MCF 10A (cell line): ENCODE measurements at regions of chr1 and their contacts with region 1.

Region 1: GRCh38 chr1:185595835-185596667 is 138.1 kb upstream of the HMCN1 start:
- DNase-seq: peak; percentile 84
- H3K4me3 Mint-ChIP-seq: no peak overlapping the region
- H3K27ac Mint-ChIP-seq: no peak overlapping the region
- H3K4me1 Mint-ChIP-seq: no peaks in the 10 kb centered on the region
- H3K27me3 Mint-ChIP-seq: no peaks in the 10 kb centered on the region
- CTCF ChIP-seq: peak; percentile 90

Region 2: GRCh38 chr1:185300152-185300551 is 295.9 kb before region 1 on chr1:
- CTCF ChIA-PET with region 1: interaction called, 19 read pairs
- POLR2A ChIA-PET with region 1: no interaction called
- intact Hi-C with region 1: no loop called
- DNase-seq: no peak
- H3K4me3 Mint-ChIP-seq: no peak overlapping the region
- H3K27ac Mint-ChIP-seq: no peak overlapping the region
- H3K4me1 Mint-ChIP-seq: no peaks in the 10 kb centered on the region
- H3K27me3 Mint-ChIP-seq: no peaks in the 10 kb centered on the region
- CTCF ChIP-seq: no peak

Region 3: DNA sequence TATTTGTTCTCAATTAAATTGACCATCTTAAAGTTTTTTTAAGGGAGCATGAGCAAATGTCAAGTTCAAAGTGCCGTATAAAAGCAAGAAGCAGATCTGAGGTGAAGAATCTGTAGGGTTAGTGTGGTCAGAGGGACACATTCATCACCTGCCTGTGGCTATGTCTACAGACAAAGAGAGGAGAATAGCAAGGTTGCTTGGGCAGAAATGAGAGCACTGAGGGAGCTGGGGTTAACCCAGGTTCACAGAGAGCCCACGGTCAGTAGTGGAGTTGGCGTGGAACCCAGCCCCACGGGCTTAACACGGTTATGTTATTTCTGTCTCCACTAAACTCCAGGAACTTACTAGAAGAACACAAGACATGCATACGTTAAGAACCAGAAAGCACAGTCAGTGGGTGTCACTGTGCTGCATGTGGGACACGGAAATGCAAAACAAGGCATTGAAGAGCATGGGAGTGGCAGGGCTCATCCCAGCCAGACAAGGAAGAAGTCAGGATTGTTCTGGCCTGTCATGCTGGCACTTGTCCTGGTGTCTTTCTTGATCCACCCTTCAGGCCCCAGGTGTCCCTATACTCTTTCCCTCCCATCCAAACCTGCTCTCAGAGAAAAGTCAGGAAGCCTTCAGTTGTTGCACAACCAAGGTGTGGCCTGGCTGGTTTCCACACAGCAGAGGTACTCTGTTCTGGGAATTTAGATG is 183.5 kb before region 1 on chr1:
- CTCF ChIA-PET with region 1: interaction called, 10 read pairs
- POLR2A ChIA-PET with region 1: interaction called, 3 read pairs
- intact Hi-C with region 1: no loop called
- DNase-seq: peak; percentile 93
- H3K4me3 Mint-ChIP-seq: no peak overlapping the region
- H3K27ac Mint-ChIP-seq: peak overlapping the region; percentile 14
- H3K4me1 Mint-ChIP-seq: peaks cover 32% of the 10 kb centered on the region
- H3K27me3 Mint-ChIP-seq: no peaks in the 10 kb centered on the region
- CTCF ChIP-seq: no peak

Region 4: DNA sequence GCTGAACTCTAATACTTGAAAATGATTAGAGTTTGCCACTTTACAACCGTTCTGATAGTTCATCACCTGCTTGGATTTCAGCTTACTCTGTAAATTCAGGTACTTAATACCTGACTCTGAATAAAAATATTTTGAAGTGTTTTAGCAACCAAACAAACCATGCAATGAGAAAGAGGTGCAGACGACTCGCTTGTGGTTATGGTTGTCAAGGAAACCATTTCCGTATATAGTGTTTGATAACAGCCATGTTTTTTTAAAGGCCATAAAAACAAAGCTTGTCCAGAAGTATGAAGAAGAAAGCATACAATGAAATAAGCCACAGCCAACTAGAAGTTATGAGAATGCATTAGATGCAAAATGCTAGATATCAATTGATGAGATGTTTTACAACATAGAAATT is 29.1 kb before region 1 on chr1:
- CTCF ChIA-PET with region 1: interaction called, 25 read pairs
- POLR2A ChIA-PET with region 1: interaction called, 6 read pairs
- intact Hi-C with region 1: no loop called
- DNase-seq: peak; percentile 77
- H3K4me3 Mint-ChIP-seq: no peak overlapping the region
- H3K27ac Mint-ChIP-seq: peak overlapping the region; percentile 96
- H3K4me1 Mint-ChIP-seq: peaks cover 53% of the 10 kb centered on the region
- H3K27me3 Mint-ChIP-seq: no peaks in the 10 kb centered on the region
- CTCF ChIP-seq: no peak

Region 5: DNA sequence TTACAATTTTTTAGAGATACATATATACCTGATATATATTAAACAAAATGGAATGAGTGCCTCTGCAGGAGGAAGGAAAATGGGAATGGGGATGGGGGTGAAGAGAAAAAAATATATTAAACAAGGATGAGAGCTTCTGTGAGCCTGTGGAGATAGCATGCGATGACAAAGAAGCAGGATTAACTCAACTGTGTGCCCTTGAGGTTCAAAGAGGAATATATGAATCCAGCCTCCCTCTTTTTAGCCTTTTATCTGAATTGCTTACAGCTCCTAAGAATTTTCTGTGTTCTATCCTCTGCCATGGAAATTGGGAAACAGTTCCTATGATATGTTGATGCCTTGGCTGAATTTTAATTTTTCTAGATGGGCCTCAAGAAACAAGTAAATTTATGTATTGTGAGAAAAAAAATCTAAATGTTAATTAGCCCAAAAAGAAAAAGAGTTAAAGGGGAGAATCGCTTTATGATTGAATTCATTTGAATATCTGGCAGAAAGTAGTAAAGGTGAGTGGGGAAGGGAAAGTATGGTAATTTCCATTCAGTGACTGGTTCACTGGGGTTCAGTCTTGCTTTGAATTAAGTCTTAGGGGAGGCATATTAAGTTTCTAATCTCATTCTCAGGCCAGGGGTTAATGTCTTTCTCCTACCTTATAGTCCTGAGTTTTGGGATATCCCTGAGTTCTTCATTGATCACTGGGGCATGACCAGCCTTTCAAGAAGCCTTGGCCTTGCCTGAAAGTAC is 31.9 kb after region 1 on chr1:
- CTCF ChIA-PET with region 1: interaction called, 15 read pairs
- POLR2A ChIA-PET with region 1: no interaction called
- intact Hi-C with region 1: no loop called
- DNase-seq: no peak
- H3K4me3 Mint-ChIP-seq: no peak overlapping the region
- H3K27ac Mint-ChIP-seq: no peak overlapping the region
- H3K4me1 Mint-ChIP-seq: peaks cover 9% of the 10 kb centered on the region
- H3K27me3 Mint-ChIP-seq: no peaks in the 10 kb centered on the region
- CTCF ChIP-seq: no peak

Region 6: GRCh38 chr1:185670187-185670627 is 74.2 kb after region 1 on chr1:
- CTCF ChIA-PET with region 1: interaction called, 38 read pairs
- POLR2A ChIA-PET with region 1: interaction called, 3 read pairs
- intact Hi-C with region 1: loop called (anchors 1 kb)
- DNase-seq: peak; percentile 69
- H3K4me3 Mint-ChIP-seq: no peak overlapping the region
- H3K27ac Mint-ChIP-seq: no peak overlapping the region
- H3K4me1 Mint-ChIP-seq: no peaks in the 10 kb centered on the region
- H3K27me3 Mint-ChIP-seq: no peaks in the 10 kb centered on the region
- CTCF ChIP-seq: peak; percentile 78